ENCODE measurements at regions of chr11 and their contacts with region 1.

Region 1: GRCh38 chr11:92707173-92707619 is 262.3 kb upstream of the MTNR1B start:
- DNase-seq: no peak
- ATAC-seq: peak; percentile 47 to 54

Region 2: DNA sequence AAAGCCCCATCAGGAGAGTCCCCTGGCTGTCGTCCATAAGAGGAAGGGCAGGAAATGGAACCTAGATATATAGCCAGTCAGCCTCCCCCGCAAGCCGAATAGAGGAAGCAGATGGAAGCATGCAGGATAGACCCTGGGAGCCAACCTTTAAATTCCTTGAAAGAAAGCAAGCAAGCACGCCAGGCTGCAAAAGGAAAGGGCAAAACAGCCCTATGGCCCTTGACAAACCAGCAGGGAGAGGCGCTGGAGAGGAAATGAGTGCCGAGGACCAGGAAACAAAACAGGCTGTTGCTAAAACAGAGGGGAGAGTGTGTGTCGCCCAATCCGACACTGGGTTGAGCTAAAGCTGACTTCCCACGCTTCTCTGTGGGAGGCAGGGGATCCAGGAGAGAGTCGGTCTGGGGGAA is 58.8 kb after region 1 on chr11:
- intact Hi-C with region 1: loop called in 1 of 2 experiments (anchors 10 kb)
- DNase-seq: peak; percentile 40
- ATAC-seq: peak; percentile 70 to 74

Measured in left cardiac atrium (tissue), 4 donors.